ENCODE measurements at regions of chr3 and their contacts with region 1.

Region 1: DNA sequence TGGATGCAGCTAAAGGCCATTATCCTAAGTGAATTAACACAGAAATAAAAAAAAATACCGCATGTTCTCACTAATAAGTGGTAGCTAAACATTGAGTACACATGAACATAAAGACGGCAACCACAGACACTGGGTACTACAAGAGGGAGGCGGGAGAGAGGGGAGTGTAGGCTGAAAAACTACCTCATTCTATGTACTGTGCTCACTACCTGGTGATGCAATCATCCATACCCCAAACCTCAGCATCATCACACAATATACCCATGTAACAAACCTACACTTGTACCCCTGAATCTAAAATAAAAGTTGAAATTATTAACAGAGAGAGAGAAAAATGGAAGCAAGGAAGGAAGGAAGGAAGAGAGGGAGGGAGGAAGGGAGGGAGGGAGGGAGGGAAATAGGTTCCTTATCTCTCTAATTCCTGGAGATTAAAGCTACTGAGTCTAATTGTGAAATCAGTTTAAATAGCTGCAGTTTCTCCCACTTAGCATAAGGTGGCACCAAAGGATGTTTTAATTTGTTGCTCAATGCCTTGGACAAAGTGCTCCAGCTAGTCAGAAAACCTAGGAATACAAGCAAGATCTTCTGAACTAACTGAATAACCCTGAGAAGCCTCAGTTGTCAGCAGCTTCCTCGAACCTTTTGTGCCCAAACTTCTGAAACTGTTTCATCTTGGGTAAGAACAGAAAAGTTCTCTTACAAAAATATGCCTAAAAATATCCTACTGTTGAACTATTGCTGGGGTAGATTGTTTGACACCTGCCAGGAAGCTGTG is 79.4 kb upstream of the ATP11B start:
- DNase-seq: peak in 2 of 9 experiments; percentile 47 to 61
- ATAC-seq: peak; percentile 48
- H3K4me3 ChIP-seq: no peak overlapping the region
- H3K4me3 Mint-ChIP-seq: no peak overlapping the region
- H3K27ac ChIP-seq: no peak overlapping the region
- H3K27ac Mint-ChIP-seq: no peak overlapping the region
- H3K4me1 ChIP-seq: no peaks in the 10 kb centered on the region
- H3K4me1 Mint-ChIP-seq: peaks cover 6% of the 10 kb centered on the region
- H3K27me3 ChIP-seq: no peaks in the 10 kb centered on the region
- H3K27me3 Mint-ChIP-seq: peaks cover 6% of the 10 kb centered on the region
- CTCF ChIP-seq: peak; percentile 76

Region 2: GRCh38 chr3:182729903-182730674 is 16.2 kb after region 1 on chr3:
- CTCF ChIA-PET with region 1: interaction called, 10 read pairs
- POLR2A ChIA-PET with region 1: no interaction called
- intact Hi-C with region 1: no loop called
- DNase-seq: no peak
- ATAC-seq: no peak
- H3K4me3 ChIP-seq: no peak overlapping the region
- H3K4me3 Mint-ChIP-seq: no peak overlapping the region
- H3K27ac ChIP-seq: no peak overlapping the region
- H3K27ac Mint-ChIP-seq: no peak overlapping the region
- H3K4me1 ChIP-seq: no peaks in the 10 kb centered on the region
- H3K4me1 Mint-ChIP-seq: no peaks in the 10 kb centered on the region
- H3K27me3 ChIP-seq: no peaks in the 10 kb centered on the region
- H3K27me3 Mint-ChIP-seq: peaks cover 10% of the 10 kb centered on the region
- CTCF ChIP-seq: no peak

Region 3: DNA sequence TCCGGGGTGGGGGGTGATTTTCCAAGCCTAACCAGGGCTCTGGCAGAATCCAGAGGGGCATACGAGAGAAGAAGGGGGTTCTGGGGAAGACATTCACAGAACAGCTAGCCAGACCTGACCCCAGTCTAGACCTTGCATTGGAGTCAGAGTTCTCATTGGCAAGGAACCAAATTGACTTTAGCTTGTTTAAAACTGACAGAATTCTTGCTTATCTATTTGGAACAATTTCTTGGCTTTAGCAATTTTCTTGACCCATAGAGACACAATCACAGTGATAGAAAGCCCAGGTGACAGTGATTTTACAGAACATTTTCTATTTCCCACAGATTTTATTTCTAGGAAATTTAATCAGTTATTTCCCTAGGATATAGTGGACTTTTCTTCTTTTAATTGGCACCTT is 55.7 kb after region 1 on chr3:
- CTCF ChIA-PET with region 1: no interaction called
- POLR2A ChIA-PET with region 1: no interaction called
- intact Hi-C with region 1: no loop called
- DNase-seq: no peak
- ATAC-seq: no peak
- H3K4me3 ChIP-seq: no peak overlapping the region
- H3K4me3 Mint-ChIP-seq: no peak overlapping the region
- H3K27ac ChIP-seq: no peak overlapping the region
- H3K27ac Mint-ChIP-seq: no peak overlapping the region
- H3K4me1 ChIP-seq: no peaks in the 10 kb centered on the region
- H3K4me1 Mint-ChIP-seq: no peaks in the 10 kb centered on the region
- H3K27me3 ChIP-seq: no peaks in the 10 kb centered on the region
- H3K27me3 Mint-ChIP-seq: no peaks in the 10 kb centered on the region
- CTCF ChIP-seq: no peak

Region 4: GRCh38 chr3:182837855-182838454 is 124.0 kb after region 1 on chr3:
- CTCF ChIA-PET with region 1: interaction called, 19 read pairs
- POLR2A ChIA-PET with region 1: no interaction called
- intact Hi-C with region 1: loop called (anchors 1 kb)
- DNase-seq: peak in 2 of 9 experiments; percentile 27 to 52
- ATAC-seq: no peak
- H3K4me3 ChIP-seq: no peak overlapping the region
- H3K4me3 Mint-ChIP-seq: no peak overlapping the region
- H3K27ac ChIP-seq: no peak overlapping the region
- H3K27ac Mint-ChIP-seq: no peak overlapping the region
- H3K4me1 ChIP-seq: no peaks in the 10 kb centered on the region
- H3K4me1 Mint-ChIP-seq: no peaks in the 10 kb centered on the region
- H3K27me3 ChIP-seq: no peaks in the 10 kb centered on the region
- H3K27me3 Mint-ChIP-seq: no peaks in the 10 kb centered on the region
- CTCF ChIP-seq: peak; percentile 57

Region 5: DNA sequence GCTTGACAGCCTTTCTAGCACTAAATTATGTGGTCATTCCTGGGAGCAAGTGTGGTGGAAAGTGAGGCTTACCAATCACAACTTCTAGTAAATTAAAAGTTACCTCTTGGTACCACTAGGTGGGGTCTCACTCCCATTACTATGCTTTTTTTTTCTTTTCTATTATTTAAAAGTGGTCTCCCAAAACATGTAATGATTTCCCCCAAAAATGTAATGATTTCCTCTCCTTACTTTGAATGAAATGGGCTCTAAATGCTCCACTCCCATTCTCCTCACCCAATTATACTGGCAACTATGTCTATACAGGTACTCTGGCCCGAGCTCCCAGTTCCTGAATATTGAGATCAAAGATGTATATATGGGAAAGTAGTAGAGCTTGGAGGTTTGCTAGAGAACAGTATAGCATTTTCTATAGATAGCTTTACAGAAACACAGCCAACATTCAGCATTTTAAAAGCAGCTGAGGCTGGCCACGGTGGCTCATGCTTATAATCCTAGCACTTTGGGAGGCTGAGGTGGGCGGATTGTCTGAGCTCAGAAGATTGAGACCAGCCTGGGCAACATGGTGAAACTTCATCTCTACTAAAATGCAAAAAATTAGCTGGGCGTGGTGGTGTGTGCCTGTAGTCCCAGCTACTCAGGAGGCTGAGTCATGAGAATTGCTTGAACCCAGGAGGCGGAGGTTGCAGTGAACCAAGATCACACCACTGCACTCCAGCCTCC is 195.5 kb after region 1 on chr3:
- CTCF ChIA-PET with region 1: no interaction called
- POLR2A ChIA-PET with region 1: no interaction called
- intact Hi-C with region 1: loop called in 1 of 2 experiments (anchors 10 kb)
- DNase-seq: peak in 2 of 9 experiments; percentile 28 to 49
- ATAC-seq: peak; percentile 41
- H3K4me3 ChIP-seq: no peak overlapping the region
- H3K4me3 Mint-ChIP-seq: no peak overlapping the region
- H3K27ac ChIP-seq: no peak overlapping the region
- H3K27ac Mint-ChIP-seq: no peak overlapping the region
- H3K4me1 ChIP-seq: peaks cover 20% of the 10 kb centered on the region
- H3K4me1 Mint-ChIP-seq: peaks cover 43% of the 10 kb centered on the region
- H3K27me3 ChIP-seq: no peaks in the 10 kb centered on the region
- H3K27me3 Mint-ChIP-seq: no peaks in the 10 kb centered on the region
- CTCF ChIP-seq: peak; percentile 70

Region 6: GRCh38 chr3:183027276-183027675 is 313.3 kb after region 1 on chr3:
- CTCF ChIA-PET with region 1: no interaction called
- POLR2A ChIA-PET with region 1: no interaction called
- intact Hi-C with region 1: loop called in 1 of 2 experiments (anchors 10 kb)
- DNase-seq: no peak
- ATAC-seq: no peak
- H3K4me3 ChIP-seq: no peak overlapping the region
- H3K4me3 Mint-ChIP-seq: no peak overlapping the region
- H3K27ac ChIP-seq: no peak overlapping the region
- H3K27ac Mint-ChIP-seq: no peak overlapping the region
- H3K4me1 ChIP-seq: no peaks in the 10 kb centered on the region
- H3K4me1 Mint-ChIP-seq: no peaks in the 10 kb centered on the region
- H3K27me3 ChIP-seq: no peaks in the 10 kb centered on the region
- H3K27me3 Mint-ChIP-seq: no peaks in the 10 kb centered on the region
- CTCF ChIP-seq: no peak

Region 7: GRCh38 chr3:183122257-183122932 is 408.5 kb after region 1 on chr3:
- CTCF ChIA-PET with region 1: no interaction called
- POLR2A ChIA-PET with region 1: no interaction called
- intact Hi-C with region 1: loop called in 1 of 2 experiments (anchors 1 kb)
- DNase-seq: peak in 2 of 9 experiments; percentile 58 to 69
- ATAC-seq: peak; percentile 65
- H3K4me3 ChIP-seq: no peak overlapping the region
- H3K4me3 Mint-ChIP-seq: no peak overlapping the region
- H3K27ac ChIP-seq: no peak overlapping the region
- H3K27ac Mint-ChIP-seq: no peak overlapping the region
- H3K4me1 ChIP-seq: no peaks in the 10 kb centered on the region
- H3K4me1 Mint-ChIP-seq: no peaks in the 10 kb centered on the region
- H3K27me3 ChIP-seq: no peaks in the 10 kb centered on the region
- H3K27me3 Mint-ChIP-seq: peaks cover 6% of the 10 kb centered on the region
- CTCF ChIP-seq: peak; percentile 93